Left ventricle myocardium inferior (tissue), 1 donor: ENCODE measurements at regions of chr15 and their contacts with region 1.

Region 1: GRCh38 chr15:64209680-64210334 is 47.0 kb upstream of the PPIB start:
- DNase-seq: no peak
- H3K4me3 ChIP-seq: no peak overlapping the region
- H3K27ac ChIP-seq: no peak overlapping the region
- H3K4me1 ChIP-seq: no peaks in the 10 kb centered on the region
- H3K27me3 ChIP-seq: no peaks in the 10 kb centered on the region
- CTCF ChIP-seq: peak; percentile 56

Region 2: DNA sequence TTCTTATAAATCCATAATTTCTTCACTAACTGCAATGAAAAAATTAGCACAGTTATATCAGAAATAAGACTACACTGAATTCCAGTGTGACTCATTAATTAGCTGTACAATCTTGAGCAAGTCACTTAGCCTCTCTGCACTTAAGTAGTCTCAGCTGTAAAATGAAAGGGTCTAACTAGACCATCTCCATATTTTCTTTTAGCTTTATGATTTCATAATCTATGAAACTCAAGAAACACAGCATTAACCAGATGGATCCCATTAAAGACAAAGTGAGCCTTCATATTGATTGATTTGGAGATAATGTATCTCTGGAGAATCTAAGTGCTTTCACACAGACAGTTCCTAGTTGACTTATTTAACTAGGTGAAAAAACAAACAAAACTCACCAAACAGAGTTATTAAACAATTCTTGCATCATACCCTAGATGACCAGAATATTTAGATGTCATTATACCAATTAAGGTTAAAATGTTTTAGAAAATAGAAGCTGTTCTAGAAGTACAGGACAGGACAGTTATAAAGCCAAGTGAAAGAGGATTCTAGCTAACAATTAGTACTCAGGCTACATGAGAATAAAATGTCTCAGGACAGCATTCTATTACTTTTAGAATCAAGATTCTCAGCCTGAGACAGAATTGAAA is 135.0 kb after region 1 on chr15:
- intact Hi-C with region 1: loop called (anchors 10 kb)
- DNase-seq: no peak
- H3K4me3 ChIP-seq: no peak overlapping the region
- H3K27ac ChIP-seq: no peak overlapping the region
- H3K4me1 ChIP-seq: peaks cover 34% of the 10 kb centered on the region
- H3K27me3 ChIP-seq: no peaks in the 10 kb centered on the region
- CTCF ChIP-seq: no peak